H1 (cell line): ENCODE measurements at regions of chr2 and their contacts with region 1.

Region 1: GRCh38 chr2:241975890-241976695 is 106.6 kb downstream of the RTP5 start:
- DNase-seq: no peak
- H3K4me3 ChIP-seq: no peak overlapping the region
- H3K27ac ChIP-seq: no peak overlapping the region
- H3K4me1 ChIP-seq: no peaks in the 10 kb centered on the region
- H3K27me3 ChIP-seq: no peaks in the 10 kb centered on the region
- CTCF ChIP-seq: no peak
- EP300 ChIP-seq: no peak
- POLR2A ChIP-seq: no peak
- RAD21 ChIP-seq: no peak

Region 2: GRCh38 chr2:241950413-241951315 is 25.4 kb before region 1 on chr2:
- CTCF ChIA-PET with region 1: interaction called, 11 read pairs
- POLR2A ChIA-PET with region 1: no interaction called
- DNase-seq: peak; percentile 70 to 96
- H3K4me3 ChIP-seq: no peak overlapping the region; a peak in 1 of 8 replicates
- H3K27ac ChIP-seq: no peak overlapping the region
- H3K4me1 ChIP-seq: peaks cover 0 to 11% (median 3%) of the 10 kb centered on the region in 4 experiments; a peak in 3 of 7 replicates
- H3K27me3 ChIP-seq: peaks cover 0 to 19% (median 7%) of the 10 kb centered on the region in 4 experiments; a peak in 5 of 7 replicates
- CTCF ChIP-seq: peak in 2 of 3 experiments; percentile 95 to 96; a peak in 3 of 4 replicates
- EP300 ChIP-seq: no peak
- POLR2A ChIP-seq: no peak
- RAD21 ChIP-seq: peak; percentile 98 to 99